PC-9 (cell line): ENCODE measurements at regions of chr1 and their contacts with region 1.

Region 1: GRCh38 chr1:52531249-52531872 is 21.5 kb downstream of the TUT4 start:
- DNase-seq: no peak
- H3K4me3 ChIP-seq: no peak overlapping the region
- H3K27ac ChIP-seq: no peak overlapping the region
- H3K4me1 ChIP-seq: no peaks in the 10 kb centered on the region
- H3K27me3 ChIP-seq: no peaks in the 10 kb centered on the region
- CTCF ChIP-seq: no peak

Region 2: GRCh38 chr1:52424231-52424636 is 107.1 kb before region 1 on chr1:
- CTCF ChIA-PET with region 1: no interaction called
- POLR2A ChIA-PET with region 1: no interaction called
- intact Hi-C with region 1: no loop called
- DNase-seq: no peak
- H3K4me3 ChIP-seq: no peak overlapping the region
- H3K27ac ChIP-seq: no peak overlapping the region
- H3K4me1 ChIP-seq: peaks cover 25% of the 10 kb centered on the region
- H3K27me3 ChIP-seq: no peaks in the 10 kb centered on the region
- CTCF ChIP-seq: no peak

Region 3: GRCh38 chr1:52511851-52512615 is 19.3 kb before region 1 on chr1:
- CTCF ChIA-PET with region 1: no interaction called
- POLR2A ChIA-PET with region 1: interaction called, 30 read pairs
- intact Hi-C with region 1: no loop called
- DNase-seq: no peak
- H3K4me3 ChIP-seq: no peak overlapping the region
- H3K27ac ChIP-seq: no peak overlapping the region
- H3K4me1 ChIP-seq: no peaks in the 10 kb centered on the region
- H3K27me3 ChIP-seq: no peaks in the 10 kb centered on the region
- CTCF ChIP-seq: no peak